Activated CD4-positive, alpha-beta T cell treated with anti-CD3 and anti-CD28 coated beads for 36 hours (primary cell): ENCODE measurements at regions of chr2 and their contacts with region 1.

Region 1: DNA sequence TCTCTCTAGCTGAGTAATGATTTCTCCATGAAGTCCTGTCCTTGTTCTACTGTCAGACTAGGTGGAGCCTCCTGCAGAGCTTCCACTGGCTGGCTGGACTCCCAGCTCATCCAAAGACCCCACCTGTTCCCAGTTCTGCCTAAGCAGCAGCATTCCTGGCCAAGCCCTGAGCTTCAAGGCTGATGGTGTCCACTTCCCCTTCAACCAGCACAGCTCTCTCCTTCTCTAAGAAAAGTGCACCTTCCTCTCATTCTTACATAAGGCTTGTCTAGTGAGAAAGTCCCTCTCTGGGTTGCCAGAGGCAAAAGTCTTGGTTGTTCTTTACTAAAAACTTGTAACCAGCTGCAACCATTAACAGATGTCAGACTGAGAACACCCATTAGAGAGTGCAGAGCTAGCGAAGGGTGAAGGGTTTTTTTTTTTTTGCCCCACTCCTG is 58.9 kb downstream of the CXCR4 start:
- DNase-seq: no peak
- ATAC-seq: no peak
- H3K4me3 Mint-ChIP-seq: no peak overlapping the region
- H3K27ac Mint-ChIP-seq: no peak overlapping the region
- H3K4me1 Mint-ChIP-seq: peaks cover 49% of the 10 kb centered on the region
- H3K27me3 Mint-ChIP-seq: no peaks in the 10 kb centered on the region

Region 2: GRCh38 chr2:135948642-135949355 is 110.3 kb before region 1 on chr2:
- CTCF ChIA-PET with region 1: no interaction called
- POLR2A ChIA-PET with region 1: interaction called, 3 read pairs
- intact Hi-C with region 1: loop called in 1 of 2 experiments (anchors 1 kb)
- DNase-seq: no peak
- ATAC-seq: peak; percentile 81
- H3K4me3 Mint-ChIP-seq: peak overlapping the region; percentile 39
- H3K27ac Mint-ChIP-seq: peak overlapping the region; percentile 84
- H3K4me1 Mint-ChIP-seq: peaks cover 55% of the 10 kb centered on the region
- H3K27me3 Mint-ChIP-seq: no peaks in the 10 kb centered on the region

Region 3: DNA sequence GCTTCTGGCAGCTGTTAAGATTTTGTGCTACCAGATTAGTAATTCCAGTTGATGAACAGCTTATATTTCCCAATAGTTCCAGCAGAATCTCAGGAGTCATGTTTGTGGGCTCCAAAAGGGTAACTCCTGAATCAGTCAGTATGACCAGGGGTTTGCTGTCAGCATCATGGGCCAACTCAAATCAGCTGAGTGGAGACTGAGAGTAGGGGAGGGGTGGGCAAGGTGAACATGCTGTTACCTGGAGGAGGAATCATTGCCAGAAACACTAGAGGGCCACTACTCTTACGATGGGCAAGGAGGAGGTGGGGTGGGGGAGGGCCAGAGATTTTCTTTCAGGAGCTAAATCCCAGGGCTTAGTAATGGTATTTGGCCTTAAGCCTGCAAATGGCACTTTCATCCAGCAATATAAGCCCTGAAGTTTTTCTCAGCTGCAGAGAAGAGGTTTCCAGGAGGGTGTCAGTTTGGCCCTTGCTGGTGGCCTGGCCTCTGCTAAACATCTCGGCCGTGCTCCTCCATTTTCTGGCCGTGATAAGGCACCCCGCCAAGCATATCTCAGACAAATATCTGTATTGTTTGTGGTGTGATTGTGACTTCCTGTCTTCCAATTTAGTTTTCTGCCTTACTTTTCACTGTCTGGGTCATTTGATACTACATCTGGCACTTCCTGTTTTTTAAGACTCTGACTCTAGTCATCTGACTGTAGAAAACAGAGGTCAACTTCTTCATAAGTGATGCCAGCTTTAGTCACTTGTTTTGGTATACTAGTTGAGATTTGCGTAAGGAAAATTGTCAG is 179.4 kb after region 1 on chr2:
- CTCF ChIA-PET with region 1: no interaction called
- POLR2A ChIA-PET with region 1: no interaction called
- intact Hi-C with region 1: loop called in 1 of 2 experiments (anchors 10 kb)
- DNase-seq: peak; percentile 44
- ATAC-seq: peak; percentile 82
- H3K4me3 Mint-ChIP-seq: peak overlapping the region; percentile 15
- H3K27ac Mint-ChIP-seq: peak overlapping the region; percentile 93
- H3K4me1 Mint-ChIP-seq: peaks cover 43% of the 10 kb centered on the region
- H3K27me3 Mint-ChIP-seq: no peaks in the 10 kb centered on the region

Region 4: DNA sequence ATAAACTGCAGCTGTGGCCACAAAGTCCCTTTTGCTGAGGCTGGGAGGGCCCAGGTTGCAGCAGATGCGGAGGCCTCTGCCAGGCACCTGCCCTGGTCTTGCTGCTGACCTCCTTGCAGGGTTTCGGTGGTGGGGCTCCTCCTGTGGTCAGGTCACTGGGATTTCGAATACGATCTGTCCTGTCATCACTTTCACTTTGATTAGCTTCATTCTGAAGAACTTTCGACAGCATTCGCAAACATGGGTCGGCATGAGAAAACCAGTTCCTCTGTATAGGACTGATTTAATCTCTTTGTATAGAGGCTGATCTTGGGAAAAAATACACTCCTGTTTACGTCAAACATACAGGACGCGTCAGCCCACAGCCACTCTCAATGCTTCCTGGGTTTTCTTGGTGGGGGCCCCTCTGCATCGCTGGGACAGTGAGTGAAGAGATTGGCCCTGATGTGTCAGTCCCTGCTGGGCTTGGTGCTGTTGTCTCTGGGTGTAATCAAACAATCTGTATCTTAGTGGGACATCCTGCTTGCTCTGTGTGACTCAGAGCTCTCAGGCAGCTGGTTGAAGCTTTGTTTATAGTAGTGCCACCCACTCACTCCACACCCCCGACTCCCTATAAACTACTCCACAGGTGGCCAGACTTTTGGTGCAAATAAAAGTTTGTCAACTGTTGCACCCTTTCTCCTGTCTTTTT is 268.3 kb after region 1 on chr2:
- CTCF ChIA-PET with region 1: no interaction called
- POLR2A ChIA-PET with region 1: no interaction called
- intact Hi-C with region 1: loop called (anchors 2 to 5 kb)
- DNase-seq: peak; percentile 88
- ATAC-seq: peak; percentile 95
- H3K4me3 Mint-ChIP-seq: peak overlapping the region; percentile 56
- H3K27ac Mint-ChIP-seq: peak overlapping the region; percentile 92
- H3K4me1 Mint-ChIP-seq: peaks cover 69% of the 10 kb centered on the region
- H3K27me3 Mint-ChIP-seq: no peaks in the 10 kb centered on the region

Region 5: GRCh38 chr2:136378712-136379595 is 319.9 kb after region 1 on chr2:
- CTCF ChIA-PET with region 1: interaction called, 13 read pairs
- POLR2A ChIA-PET with region 1: interaction called, 6 read pairs
- intact Hi-C with region 1: loop called (anchors 1 to 2 kb)
- DNase-seq: peak; percentile 87
- ATAC-seq: peak; percentile 11
- H3K4me3 Mint-ChIP-seq: no peak overlapping the region
- H3K27ac Mint-ChIP-seq: no peak overlapping the region
- H3K4me1 Mint-ChIP-seq: peaks cover 82% of the 10 kb centered on the region
- H3K27me3 Mint-ChIP-seq: no peaks in the 10 kb centered on the region

Region 6: DNA sequence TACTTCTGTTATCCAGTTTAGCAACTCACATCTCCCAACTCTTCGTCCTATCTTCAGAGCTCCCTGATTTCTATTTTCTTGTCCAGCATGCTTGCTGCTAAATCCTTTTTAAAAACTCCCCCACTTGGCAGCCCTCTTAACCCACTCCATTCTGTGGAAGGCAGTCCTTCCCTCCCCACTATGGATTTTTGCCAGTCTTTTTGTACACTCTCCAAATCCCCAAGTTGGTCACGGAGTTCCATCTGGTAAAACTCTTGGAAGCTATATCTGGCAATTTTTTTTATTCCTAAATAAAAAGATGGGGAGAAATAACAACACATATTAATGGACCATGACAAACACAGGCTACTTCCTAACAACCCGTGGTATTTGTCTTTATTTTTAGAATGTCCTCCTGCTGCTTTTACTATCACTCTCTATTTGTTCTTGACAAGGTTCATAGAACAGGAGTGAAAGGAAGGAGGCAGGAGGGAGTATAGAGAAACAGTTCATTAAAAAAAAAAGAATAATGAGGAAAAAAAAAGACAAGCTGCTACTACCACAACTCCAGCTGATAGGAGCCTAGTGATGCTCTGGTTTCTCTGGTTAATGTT is 586.3 kb after region 1 on chr2:
- CTCF ChIA-PET with region 1: no interaction called
- POLR2A ChIA-PET with region 1: no interaction called
- intact Hi-C with region 1: no loop called
- DNase-seq: no peak
- ATAC-seq: no peak
- H3K4me3 Mint-ChIP-seq: no peak overlapping the region
- H3K27ac Mint-ChIP-seq: no peak overlapping the region
- H3K4me1 Mint-ChIP-seq: no peaks in the 10 kb centered on the region
- H3K27me3 Mint-ChIP-seq: peaks cover 5% of the 10 kb centered on the region